ENCODE measurements at regions of chr2 and their contacts with region 1.

Region 1: GRCh38 chr2:129334696-129335410 is 644.6 kb upstream of the RAB6C start:
- DNase-seq: no peak
- H3K4me3 ChIP-seq: no peak overlapping the region
- H3K27ac ChIP-seq: no peak overlapping the region
- H3K4me1 ChIP-seq: no peaks in the 10 kb centered on the region
- H3K27me3 ChIP-seq: no peaks in the 10 kb centered on the region
- CTCF ChIP-seq: no peak

Region 2: DNA sequence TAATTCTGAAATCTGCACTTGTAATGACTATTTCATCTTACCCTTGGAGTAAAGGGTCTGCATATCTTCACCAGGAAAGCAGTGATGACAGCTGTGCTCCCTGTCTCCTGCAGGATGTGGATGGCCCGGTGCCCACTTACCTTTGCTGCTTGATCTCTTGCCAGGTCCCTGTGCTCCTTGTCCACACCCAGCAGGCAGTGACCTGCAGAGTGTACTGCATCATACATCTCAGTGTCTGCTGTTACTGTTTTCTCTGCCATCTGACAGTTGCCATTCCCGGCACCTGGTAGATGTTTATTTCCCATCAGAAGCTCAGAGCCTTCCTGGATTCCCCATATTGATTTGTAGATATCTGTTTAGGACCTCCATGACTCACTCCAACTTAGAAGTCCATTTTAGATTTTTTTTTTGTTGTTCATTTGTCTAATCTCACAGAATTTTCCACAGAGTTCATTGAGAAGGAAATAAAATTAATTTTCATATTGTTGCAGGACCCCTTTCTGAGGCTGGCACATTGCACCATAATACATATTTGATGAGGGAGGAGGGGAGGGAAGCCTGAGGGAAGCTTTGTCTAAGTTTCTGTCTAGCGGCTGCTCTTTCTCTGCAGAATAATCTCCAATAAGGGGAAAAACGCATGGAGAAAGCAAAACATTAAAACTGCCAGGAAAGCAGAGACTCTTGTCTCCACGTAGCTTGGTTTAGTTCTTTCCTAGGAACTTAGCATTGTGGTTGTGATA is 52.9 kb before region 1 on chr2:
- CTCF ChIA-PET with region 1: no interaction called
- dilution Hi-C with region 1: loop called (anchors 5 kb)
- in situ Hi-C with region 1: no loop called
- intact Hi-C with region 1: no loop called
- DNase-seq: no peak
- H3K4me3 ChIP-seq: no peak overlapping the region
- H3K27ac ChIP-seq: no peak overlapping the region
- H3K4me1 ChIP-seq: no peaks in the 10 kb centered on the region
- H3K27me3 ChIP-seq: no peaks in the 10 kb centered on the region
- CTCF ChIP-seq: no peak

Measured in mammary epithelial cell (primary cell).